GM12878 (cell line): ENCODE measurements at regions of chr2 and their contacts with region 1.

Region 1: DNA sequence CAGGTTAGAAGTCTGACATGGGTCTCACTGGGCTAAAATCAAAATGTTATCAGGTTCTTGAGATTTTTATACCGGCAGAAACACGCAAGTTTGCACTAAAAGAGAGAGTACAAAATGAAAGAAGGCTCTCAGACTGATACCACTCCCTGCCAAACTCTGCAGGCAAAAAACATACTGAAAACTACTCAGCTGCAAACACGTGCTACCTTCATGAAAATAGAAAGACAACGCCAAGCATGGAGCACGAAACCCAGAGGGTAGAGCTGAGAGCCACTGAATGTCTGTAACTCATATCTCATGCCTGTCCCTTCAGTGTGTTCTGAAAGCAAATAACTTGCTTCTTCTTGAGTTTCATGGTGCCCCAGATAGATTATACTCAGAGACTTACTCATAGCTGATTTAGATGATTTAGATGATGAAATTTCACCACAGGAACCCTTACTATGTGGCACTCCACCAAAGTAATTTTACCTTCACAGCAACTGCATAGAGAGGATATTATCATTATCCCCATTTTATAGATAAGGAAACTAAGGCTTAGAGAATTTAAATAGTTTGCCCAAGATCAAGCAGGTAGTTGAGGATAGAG is 313.0 kb upstream of the SLC39A10 start:
- DNase-seq: no peak
- ATAC-seq: no peak
- H3K4me3 ChIP-seq: no peak overlapping the region
- H3K27ac ChIP-seq: no peak overlapping the region
- H3K4me1 ChIP-seq: no peaks in the 10 kb centered on the region
- H3K27me3 ChIP-seq: no peaks in the 10 kb centered on the region
- CTCF ChIP-seq: no peak
- EP300 ChIP-seq: no peak
- POLR2A ChIP-seq: no peak
- RAD21 ChIP-seq: no peak

Region 2: GRCh38 chr2:195124391-195125079 is 219.5 kb before region 1 on chr2:
- CTCF ChIA-PET with region 1: no interaction called
- POLR2A ChIA-PET with region 1: no interaction called
- RAD21 ChIA-PET with region 1: no interaction called
- SMC1A ChIA-PET with region 1: no interaction called
- in situ Hi-C with region 1: no loop called
- intact Hi-C with region 1: no loop called
- DNase-seq: no peak
- ATAC-seq: no peak
- H3K4me3 ChIP-seq: no peak overlapping the region
- H3K27ac ChIP-seq: no peak overlapping the region
- H3K4me1 ChIP-seq: no peaks in the 10 kb centered on the region
- H3K27me3 ChIP-seq: no peaks in the 10 kb centered on the region
- CTCF ChIP-seq: no peak
- EP300 ChIP-seq: no peak
- POLR2A ChIP-seq: no peak
- RAD21 ChIP-seq: no peak

Region 3: DNA sequence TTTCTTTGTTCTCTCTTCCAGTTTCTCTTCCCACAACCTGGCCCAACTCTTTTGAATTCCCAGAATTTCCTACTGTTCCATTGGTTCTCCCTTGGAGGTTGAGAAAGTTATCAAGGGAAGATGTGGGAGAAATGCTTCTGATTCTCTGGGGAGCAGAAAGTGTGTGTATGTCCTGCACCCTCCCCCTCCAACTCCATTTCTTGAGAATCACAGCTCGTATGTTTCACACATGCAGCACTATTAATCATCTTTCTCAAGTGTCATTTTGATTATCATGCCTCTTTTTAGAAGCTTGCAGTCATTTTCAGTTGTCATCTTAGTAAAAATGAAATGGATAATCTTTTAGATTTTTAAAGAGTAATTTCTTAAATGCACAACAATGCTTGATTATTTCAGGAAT is 16.2 kb after region 1 on chr2:
- CTCF ChIA-PET with region 1: interaction called, 3 read pairs
- POLR2A ChIA-PET with region 1: no interaction called
- RAD21 ChIA-PET with region 1: no interaction called
- SMC1A ChIA-PET with region 1: interaction called, 11 read pairs
- in situ Hi-C with region 1: no loop called
- intact Hi-C with region 1: no loop called
- DNase-seq: no peak
- ATAC-seq: no peak
- H3K4me3 ChIP-seq: no peak overlapping the region
- H3K27ac ChIP-seq: no peak overlapping the region
- H3K4me1 ChIP-seq: no peaks in the 10 kb centered on the region
- H3K27me3 ChIP-seq: no peaks in the 10 kb centered on the region
- CTCF ChIP-seq: no peak
- EP300 ChIP-seq: no peak
- POLR2A ChIP-seq: no peak
- RAD21 ChIP-seq: no peak